CD8-positive, alpha-beta T cell (primary cell): ENCODE measurements at regions of chr2 and their contacts with region 1.

Region 1: DNA sequence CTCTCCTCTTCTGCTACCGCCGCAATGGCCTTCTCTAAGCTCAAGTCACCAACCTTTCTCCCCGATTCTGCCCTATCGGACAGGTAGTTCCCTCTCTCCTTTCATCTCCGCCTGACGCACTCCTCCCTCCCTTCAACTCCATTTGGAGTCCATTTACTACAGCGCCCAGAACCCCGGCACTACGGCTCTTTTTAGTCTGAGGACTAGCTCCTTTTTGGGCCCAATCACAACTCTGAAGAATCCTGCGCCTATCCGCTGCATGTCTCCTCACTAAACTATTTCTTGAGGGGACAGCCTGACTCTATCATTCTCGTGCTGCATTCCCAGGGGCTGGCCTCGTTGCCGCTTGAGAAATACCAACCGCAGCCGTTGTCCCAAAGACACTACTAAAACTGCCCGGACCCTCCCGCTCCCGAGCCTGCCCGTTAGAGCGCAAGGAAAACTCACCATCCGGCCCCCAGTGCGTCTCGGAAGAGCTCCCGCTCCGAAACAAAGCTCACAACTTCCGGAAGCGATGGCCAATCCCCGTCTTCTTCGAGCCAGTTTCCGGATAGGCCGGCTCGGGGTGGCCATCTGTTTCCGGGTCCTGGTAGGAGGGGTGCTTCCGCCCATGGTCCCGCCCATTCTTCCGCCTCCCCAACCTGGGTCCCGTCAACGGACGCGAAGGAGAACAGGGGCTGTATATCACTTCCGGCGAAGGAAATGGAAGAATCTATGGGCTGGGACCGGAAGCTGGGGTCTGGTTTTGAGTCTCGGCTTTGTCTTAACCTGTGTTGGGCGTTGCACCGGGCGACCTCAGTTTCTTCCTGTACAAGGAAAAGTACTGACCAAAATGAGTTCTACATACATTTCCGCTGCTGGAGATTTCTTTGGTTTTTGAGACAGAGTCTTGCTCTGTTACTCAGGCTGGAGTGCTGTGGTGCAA is at the start of gene TPRKB:
- DNase-seq: peak; percentile 86 to 98 (median 95)
- ATAC-seq: peak; percentile 95
- H3K4me3 ChIP-seq: peak within 1 kb of the TSS; percentile 57 to 89
- H3K4me3 Mint-ChIP-seq: peak within 1 kb of the TSS; percentile 98
- H3K27ac ChIP-seq: peak within 1 kb of the TSS; percentile 44 to 77
- H3K27ac Mint-ChIP-seq: peak within 1 kb of the TSS; percentile 96
- H3K4me1 ChIP-seq: peaks cover 18% of the 10 kb centered on the region
- H3K4me1 Mint-ChIP-seq: peaks cover 23% of the 10 kb centered on the region
- H3K27me3 ChIP-seq: no peaks in the 10 kb centered on the region
- H3K27me3 Mint-ChIP-seq: no peaks in the 10 kb centered on the region
- CTCF ChIP-seq: no peak
- total RNA-seq, gene TPRKB: 19.8 to 21.7 TPM

Region 2: DNA sequence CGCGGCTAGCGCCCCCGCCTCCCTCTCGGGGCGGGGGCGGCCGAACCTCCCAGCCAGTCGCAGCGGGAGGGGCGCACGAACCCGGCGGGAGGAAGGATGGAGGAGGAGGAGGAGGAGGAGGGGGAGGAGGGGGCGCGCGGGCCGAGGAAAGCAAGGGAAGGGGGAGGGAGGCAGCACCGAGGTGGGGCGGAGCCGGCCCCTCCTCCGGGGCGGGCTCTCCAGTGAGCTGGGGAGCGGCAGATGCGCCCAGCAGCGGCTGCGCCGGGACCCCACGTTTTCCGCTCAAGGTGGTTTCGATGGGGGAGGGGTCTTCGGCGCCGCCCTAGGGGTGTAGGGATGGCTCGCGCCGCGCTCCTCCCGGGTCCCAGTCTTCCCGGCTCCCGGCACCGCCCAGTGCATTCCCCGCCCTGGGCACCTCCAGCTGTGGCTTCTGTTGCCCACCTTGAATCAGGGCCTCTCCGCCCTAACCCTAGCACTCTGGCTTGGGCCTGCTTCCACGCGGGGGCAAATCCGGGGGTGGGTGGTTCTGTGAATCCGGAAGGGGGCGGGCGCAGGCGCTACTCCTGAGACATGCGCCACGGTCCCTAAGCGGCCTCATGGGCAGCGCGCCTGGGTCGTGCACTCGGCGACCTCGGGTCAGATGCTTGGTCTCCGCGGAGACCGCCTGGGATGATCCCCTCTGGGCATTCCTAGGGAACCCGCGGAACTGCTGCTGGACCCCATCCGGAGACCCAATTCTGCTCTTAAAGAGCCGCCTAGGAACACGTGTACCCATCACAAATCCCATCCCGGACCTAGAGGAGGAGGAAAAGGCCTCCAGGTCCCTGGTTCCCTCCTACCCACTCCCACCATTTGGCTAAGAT is 452.6 kb before region 1 on chr2 and contains the start of gene FBXO41:
- CTCF ChIA-PET with region 1: no interaction called
- POLR2A ChIA-PET with region 1: no interaction called
- intact Hi-C with region 1: loop called (anchors 1 to 10 kb)
- DNase-seq: peak; percentile 26 to 87 (median 68)
- ATAC-seq: peak; percentile 84
- H3K4me3 ChIP-seq: peak within 1 kb of the TSS; percentile 77 to 81
- H3K4me3 Mint-ChIP-seq: peak within 1 kb of the TSS; percentile 91
- H3K27ac ChIP-seq: peak within 1 kb of the TSS; percentile 61 to 74
- H3K27ac Mint-ChIP-seq: peak within 1 kb of the TSS; percentile 75
- H3K4me1 ChIP-seq: peaks cover 20% of the 10 kb centered on the region
- H3K4me1 Mint-ChIP-seq: peaks cover 24% of the 10 kb centered on the region
- H3K27me3 ChIP-seq: no peaks in the 10 kb centered on the region
- H3K27me3 Mint-ChIP-seq: peaks cover 8% of the 10 kb centered on the region
- CTCF ChIP-seq: no peak
- total RNA-seq, gene FBXO41: 22.1 to 23.6 TPM

Region 3: GRCh38 chr2:73594251-73594650 is 142.9 kb before region 1 on chr2:
- CTCF ChIA-PET with region 1: no interaction called
- POLR2A ChIA-PET with region 1: no interaction called
- intact Hi-C with region 1: no loop called
- DNase-seq: no peak
- ATAC-seq: no peak
- H3K4me3 ChIP-seq: no peak overlapping the region
- H3K4me3 Mint-ChIP-seq: no peak overlapping the region
- H3K27ac ChIP-seq: no peak overlapping the region
- H3K27ac Mint-ChIP-seq: no peak overlapping the region
- H3K4me1 ChIP-seq: no peaks in the 10 kb centered on the region
- H3K4me1 Mint-ChIP-seq: no peaks in the 10 kb centered on the region
- H3K27me3 ChIP-seq: no peaks in the 10 kb centered on the region
- H3K27me3 Mint-ChIP-seq: no peaks in the 10 kb centered on the region
- CTCF ChIP-seq: no peak

Region 4: GRCh38 chr2:73611867-73612266 is 125.2 kb before region 1 on chr2:
- CTCF ChIA-PET with region 1: no interaction called
- POLR2A ChIA-PET with region 1: no interaction called
- intact Hi-C with region 1: no loop called
- DNase-seq: no peak
- ATAC-seq: no peak
- H3K4me3 ChIP-seq: no peak overlapping the region
- H3K4me3 Mint-ChIP-seq: no peak overlapping the region
- H3K27ac ChIP-seq: no peak overlapping the region
- H3K27ac Mint-ChIP-seq: no peak overlapping the region
- H3K4me1 ChIP-seq: no peaks in the 10 kb centered on the region
- H3K4me1 Mint-ChIP-seq: no peaks in the 10 kb centered on the region
- H3K27me3 ChIP-seq: no peaks in the 10 kb centered on the region
- H3K27me3 Mint-ChIP-seq: no peaks in the 10 kb centered on the region
- CTCF ChIP-seq: no peak

Region 5: GRCh38 chr2:73685770-73686438 is 51.2 kb before region 1 on chr2:
- CTCF ChIA-PET with region 1: no interaction called
- POLR2A ChIA-PET with region 1: no interaction called
- intact Hi-C with region 1: no loop called
- DNase-seq: no peak
- ATAC-seq: no peak
- H3K4me3 ChIP-seq: no peak overlapping the region
- H3K4me3 Mint-ChIP-seq: no peak overlapping the region
- H3K27ac ChIP-seq: no peak overlapping the region
- H3K27ac Mint-ChIP-seq: no peak overlapping the region
- H3K4me1 ChIP-seq: no peaks in the 10 kb centered on the region
- H3K4me1 Mint-ChIP-seq: no peaks in the 10 kb centered on the region
- H3K27me3 ChIP-seq: no peaks in the 10 kb centered on the region
- H3K27me3 Mint-ChIP-seq: peaks cover 2% of the 10 kb centered on the region
- CTCF ChIP-seq: no peak

Region 6: DNA sequence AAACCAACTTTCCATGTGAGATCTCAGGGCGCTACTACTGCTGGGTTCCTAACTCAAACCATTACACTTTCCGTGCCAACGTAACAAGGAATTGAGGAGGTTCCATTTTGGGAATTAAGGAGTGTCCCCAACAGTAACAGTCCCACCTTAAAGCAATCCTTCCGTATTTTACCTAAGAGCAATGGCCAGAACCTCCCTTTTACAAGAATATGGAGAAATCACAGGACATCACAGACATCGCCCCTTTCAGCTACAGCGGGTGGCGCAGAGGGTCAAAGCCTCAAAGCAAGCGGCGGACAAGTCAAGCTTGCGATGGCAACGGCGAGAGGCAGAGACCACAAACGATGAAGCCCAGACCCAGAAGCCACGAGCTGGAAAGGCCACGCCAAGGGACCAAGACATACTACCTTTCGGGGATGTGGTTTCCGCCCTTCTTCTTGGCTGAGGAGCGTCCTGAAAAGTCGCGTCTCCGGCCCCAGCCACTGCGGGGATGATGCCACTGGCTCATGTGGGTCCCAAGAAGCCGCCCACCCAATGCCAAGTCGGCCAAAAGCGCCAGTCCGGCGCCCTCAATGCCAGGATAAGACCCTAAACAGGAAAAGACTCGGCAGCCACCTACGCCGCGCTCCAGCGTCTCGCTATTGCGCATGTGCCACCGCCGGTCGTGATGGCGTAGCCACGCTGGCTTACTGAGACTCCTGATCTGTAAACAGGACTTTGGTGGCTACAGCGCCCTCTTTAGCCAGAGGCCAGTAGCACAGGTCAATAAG is 42.5 kb after region 1 on chr2 and contains the start of gene DUSP11:
- CTCF ChIA-PET with region 1: no interaction called
- POLR2A ChIA-PET with region 1: no interaction called
- intact Hi-C with region 1: loop called in 1 of 2 experiments (anchors 1 kb)
- DNase-seq: peak; percentile 93 to 98 (median 96)
- ATAC-seq: peak; percentile 99
- H3K4me3 ChIP-seq: peak within 1 kb of the TSS; percentile 90 to 97
- H3K4me3 Mint-ChIP-seq: peak within 1 kb of the TSS; percentile 97
- H3K27ac ChIP-seq: peak within 1 kb of the TSS; percentile 87 to 93
- H3K27ac Mint-ChIP-seq: peak within 1 kb of the TSS; percentile 99
- H3K4me1 ChIP-seq: peaks cover 21% of the 10 kb centered on the region
- H3K4me1 Mint-ChIP-seq: peaks cover 39% of the 10 kb centered on the region
- H3K27me3 ChIP-seq: no peaks in the 10 kb centered on the region
- H3K27me3 Mint-ChIP-seq: peaks cover 5% of the 10 kb centered on the region
- CTCF ChIP-seq: peak; percentile 95
- total RNA-seq, gene DUSP11: 66.7 to 67.0 TPM

Region 7: GRCh38 chr2:74119912-74120825 is 383.1 kb after region 1 on chr2:
- CTCF ChIA-PET with region 1: no interaction called
- POLR2A ChIA-PET with region 1: no interaction called
- intact Hi-C with region 1: loop called (anchors 1 kb)
- DNase-seq: peak; percentile 76 to 92 (median 83)
- ATAC-seq: peak; percentile 97
- H3K4me3 ChIP-seq: peak overlapping the region; percentile 94 to 96
- H3K4me3 Mint-ChIP-seq: peak overlapping the region; percentile 84
- H3K27ac ChIP-seq: peak overlapping the region; percentile 82 to 95
- H3K27ac Mint-ChIP-seq: peak overlapping the region; percentile 92
- H3K4me1 ChIP-seq: peaks cover 8% of the 10 kb centered on the region
- H3K4me1 Mint-ChIP-seq: peaks cover 7% of the 10 kb centered on the region
- H3K27me3 ChIP-seq: peaks cover 0 to 4% of the 10 kb centered on the region in 2 experiments
- H3K27me3 Mint-ChIP-seq: peaks cover 4% of the 10 kb centered on the region
- CTCF ChIP-seq: peak; percentile 47

Region 8: DNA sequence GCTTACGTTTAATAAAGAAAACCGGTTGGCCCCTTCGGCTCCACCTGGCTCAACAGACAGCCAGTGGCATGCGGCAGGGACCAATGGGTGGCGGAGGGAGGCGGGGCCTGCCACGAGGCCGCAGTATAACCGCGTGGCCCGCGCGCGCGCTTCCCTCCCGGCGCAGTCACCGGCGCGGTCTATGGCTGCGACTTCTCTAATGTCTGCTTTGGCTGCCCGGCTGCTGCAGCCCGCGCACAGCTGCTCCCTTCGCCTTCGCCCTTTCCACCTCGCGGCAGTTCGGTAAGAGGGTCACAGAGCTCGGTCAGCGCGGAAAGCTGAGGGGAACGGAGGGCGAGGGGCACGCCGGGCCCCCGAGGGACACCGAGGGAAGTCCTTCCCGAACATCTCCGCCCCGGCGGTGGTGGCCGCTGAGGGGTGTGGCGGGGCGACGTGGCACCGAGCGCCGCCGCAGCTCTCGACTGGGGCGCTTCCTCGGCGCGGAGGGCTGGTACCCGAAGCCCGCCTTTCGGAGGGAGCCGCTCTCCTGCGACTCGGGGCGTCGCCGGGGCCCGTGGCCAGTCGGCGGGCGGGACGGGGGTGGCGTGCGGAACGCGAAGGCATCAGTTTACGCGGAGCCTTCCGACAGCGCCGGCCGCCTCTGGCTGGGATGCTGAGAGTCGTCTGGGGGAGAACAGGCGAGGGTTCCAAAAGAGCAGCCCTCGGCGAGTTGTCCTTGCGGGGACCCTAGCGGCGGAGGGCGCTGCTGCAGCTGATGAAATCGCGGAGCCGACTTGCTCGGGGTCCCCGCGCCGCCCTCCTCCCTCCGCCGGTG is 461.6 kb after region 1 on chr2 and contains the start of gene MTHFD2:
- CTCF ChIA-PET with region 1: no interaction called
- POLR2A ChIA-PET with region 1: no interaction called
- intact Hi-C with region 1: loop called in 1 of 2 experiments (anchors 1 kb)
- DNase-seq: peak; percentile 74 to 93 (median 88)
- ATAC-seq: peak; percentile 82
- H3K4me3 ChIP-seq: peak within 1 kb of the TSS; percentile 78 to 86
- H3K4me3 Mint-ChIP-seq: peak within 1 kb of the TSS; percentile 98
- H3K27ac ChIP-seq: peak within 1 kb of the TSS; percentile 87 to 89
- H3K27ac Mint-ChIP-seq: peak within 1 kb of the TSS; percentile 99
- H3K4me1 ChIP-seq: peaks cover 17% of the 10 kb centered on the region
- H3K4me1 Mint-ChIP-seq: peaks cover 25% of the 10 kb centered on the region
- H3K27me3 ChIP-seq: no peaks in the 10 kb centered on the region
- H3K27me3 Mint-ChIP-seq: no peaks in the 10 kb centered on the region
- CTCF ChIP-seq: peak; percentile 77
- total RNA-seq, gene MTHFD2: 25.8 to 26.7 TPM

Region 9: GRCh38 chr2:74458132-74458925 is 721.2 kb after region 1 on chr2 and contains the start of gene WBP1:
- CTCF ChIA-PET with region 1: no interaction called
- POLR2A ChIA-PET with region 1: interaction called, 10 read pairs
- intact Hi-C with region 1: loop called (anchors 1 kb)
- DNase-seq: peak; percentile 96 to 100 (median 98)
- ATAC-seq: peak; percentile 77
- H3K4me3 ChIP-seq: peak within 1 kb of the TSS; percentile 84 to 95
- H3K4me3 Mint-ChIP-seq: peak within 1 kb of the TSS; percentile 97
- H3K27ac ChIP-seq: peak within 1 kb of the TSS; percentile 93 to 100
- H3K27ac Mint-ChIP-seq: peak within 1 kb of the TSS; percentile 99
- H3K4me1 ChIP-seq: peaks cover 34% of the 10 kb centered on the region
- H3K4me1 Mint-ChIP-seq: peaks cover 57% of the 10 kb centered on the region
- H3K27me3 ChIP-seq: no peaks in the 10 kb centered on the region
- H3K27me3 Mint-ChIP-seq: no peaks in the 10 kb centered on the region
- CTCF ChIP-seq: no peak
- total RNA-seq, gene WBP1: 68.5 to 70.6 TPM

Region 10: GRCh38 chr2:74507145-74507925 is 770.2 kb after region 1 on chr2 and contains the start of gene PCGF1:
- CTCF ChIA-PET with region 1: no interaction called
- POLR2A ChIA-PET with region 1: no interaction called
- intact Hi-C with region 1: loop called in 1 of 2 experiments (anchors 1 kb)
- DNase-seq: peak; percentile 98 to 100 (median 99)
- ATAC-seq: peak; percentile 90
- H3K4me3 ChIP-seq: peak within 1 kb of the TSS; percentile 96 to 99
- H3K4me3 Mint-ChIP-seq: peak within 1 kb of the TSS; percentile 99
- H3K27ac ChIP-seq: peak within 1 kb of the TSS; percentile 85 to 100
- H3K27ac Mint-ChIP-seq: peak within 1 kb of the TSS; percentile 99
- H3K4me1 ChIP-seq: peaks cover 32% of the 10 kb centered on the region
- H3K4me1 Mint-ChIP-seq: peaks cover 54% of the 10 kb centered on the region
- H3K27me3 ChIP-seq: peaks cover 13 to 20% of the 10 kb centered on the region in 2 experiments
- H3K27me3 Mint-ChIP-seq: peaks cover 54% of the 10 kb centered on the region
- CTCF ChIP-seq: peak; percentile 3
- total RNA-seq, gene PCGF1: 18.6 to 22.9 TPM